ENCODE measurements at regions of chr7 and their contacts with region 1.

Region 1: DNA sequence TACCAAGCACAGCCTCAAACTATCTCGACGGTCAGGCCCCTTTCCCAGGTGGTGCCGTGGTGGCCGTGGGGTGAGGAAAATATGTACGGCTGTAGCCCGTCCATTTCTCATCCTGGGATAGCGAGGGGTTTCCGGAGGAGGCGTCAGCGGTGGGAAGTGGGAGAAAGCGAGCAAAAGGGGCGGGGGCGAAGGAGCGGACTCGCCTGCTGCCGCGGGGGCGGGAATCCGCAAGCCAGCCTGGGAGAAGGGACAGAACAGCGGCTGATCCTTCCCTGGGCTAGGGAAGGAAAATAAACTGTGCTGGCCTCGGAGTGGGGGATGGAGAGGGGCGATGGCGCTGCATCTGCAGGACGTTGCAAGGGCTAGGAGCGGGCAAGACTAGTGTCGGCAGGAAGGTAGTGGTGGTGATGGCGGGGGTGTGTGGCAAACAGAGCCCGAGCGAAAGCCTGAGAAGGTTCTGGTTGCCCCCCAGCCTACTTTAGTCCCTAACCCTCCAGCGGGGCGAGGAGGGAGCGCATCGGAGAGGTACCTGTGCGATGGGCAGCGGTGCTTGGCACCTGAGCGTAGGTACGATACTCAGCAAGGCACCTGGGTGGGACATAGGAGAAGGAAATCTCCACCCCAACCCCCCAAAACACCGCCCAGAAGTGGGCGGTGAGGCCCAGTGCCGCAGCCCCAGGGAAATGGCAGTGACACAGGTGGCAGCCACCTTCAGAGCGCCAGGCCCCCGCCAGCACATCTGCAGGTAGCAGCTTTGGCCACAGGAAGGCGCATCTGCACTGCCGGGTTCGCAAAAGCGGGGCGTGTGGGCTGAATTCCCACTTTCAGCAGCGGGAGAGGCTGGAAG is 49.9 kb upstream of the STEAP1B start:
- DNase-seq: no peak
- H3K4me3 Mint-ChIP-seq: peak overlapping the region; percentile 56
- H3K27ac Mint-ChIP-seq: no peak overlapping the region
- H3K4me1 Mint-ChIP-seq: peaks cover 15% of the 10 kb centered on the region
- H3K27me3 Mint-ChIP-seq: peaks cover 73% of the 10 kb centered on the region

Region 2: GRCh38 chr7:22329816-22330524 is 219.9 kb before region 1 on chr7:
- intact Hi-C with region 1: no loop called
- DNase-seq: no peak
- H3K4me3 Mint-ChIP-seq: no peak overlapping the region
- H3K27ac Mint-ChIP-seq: no peak overlapping the region
- H3K4me1 Mint-ChIP-seq: no peaks in the 10 kb centered on the region
- H3K27me3 Mint-ChIP-seq: peaks cover 8% of the 10 kb centered on the region

Region 3: GRCh38 chr7:22597845-22598244 is 48.0 kb after region 1 on chr7:
- intact Hi-C with region 1: no loop called
- DNase-seq: no peak
- H3K4me3 Mint-ChIP-seq: no peak overlapping the region
- H3K27ac Mint-ChIP-seq: no peak overlapping the region
- H3K4me1 Mint-ChIP-seq: no peaks in the 10 kb centered on the region
- H3K27me3 Mint-ChIP-seq: peaks cover 19% of the 10 kb centered on the region

Region 4: GRCh38 chr7:22610951-22611757 is 61.3 kb after region 1 on chr7:
- intact Hi-C with region 1: no loop called
- DNase-seq: no peak
- H3K4me3 Mint-ChIP-seq: no peak overlapping the region
- H3K27ac Mint-ChIP-seq: no peak overlapping the region
- H3K4me1 Mint-ChIP-seq: no peaks in the 10 kb centered on the region
- H3K27me3 Mint-ChIP-seq: peaks cover 16% of the 10 kb centered on the region

Region 5: GRCh38 chr7:22782616-22783232 is 232.8 kb after region 1 on chr7:
- intact Hi-C with region 1: loop called (anchors 1 kb)
- DNase-seq: peak; percentile 57
- H3K4me3 Mint-ChIP-seq: no peak overlapping the region
- H3K27ac Mint-ChIP-seq: no peak overlapping the region
- H3K4me1 Mint-ChIP-seq: no peaks in the 10 kb centered on the region
- H3K27me3 Mint-ChIP-seq: peaks cover 8% of the 10 kb centered on the region